ENCODE measurements at regions of chr5 and their contacts with region 1.

Region 1: DNA sequence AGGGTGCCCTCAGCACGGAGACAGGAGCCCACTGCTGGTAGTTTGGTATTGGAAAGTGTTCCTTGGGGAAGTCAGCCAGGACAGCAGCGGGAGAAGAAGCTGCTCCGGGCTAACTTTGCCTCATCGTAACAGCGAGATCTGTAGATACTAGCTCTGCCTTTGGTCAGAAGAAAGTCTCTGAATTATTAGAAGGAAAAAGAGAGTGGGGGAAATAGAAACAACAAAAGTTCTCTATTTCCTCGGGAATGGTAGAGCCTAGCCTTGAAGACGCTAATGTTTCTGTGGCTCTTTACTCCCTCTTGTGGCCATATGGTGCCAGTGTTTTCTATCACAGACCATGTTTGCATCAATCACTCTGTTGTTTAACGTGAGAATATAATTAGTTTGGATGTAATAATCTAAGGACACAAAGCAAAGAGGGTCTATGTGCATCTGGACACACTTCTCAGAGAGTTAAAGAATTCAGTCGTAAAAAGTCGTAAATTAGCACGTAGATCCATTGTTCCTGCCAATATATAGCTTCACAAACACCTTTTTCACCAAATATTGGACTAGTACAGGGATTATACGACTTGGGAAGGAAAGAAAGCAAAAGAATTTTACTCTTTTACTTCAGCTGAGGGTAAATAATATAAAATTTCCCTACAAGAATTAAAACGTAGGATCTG is 40.2 kb upstream of the HSD17B4 start:
- DNase-seq: peak; percentile 25
- H3K4me3 ChIP-seq: peak overlapping the region; percentile 71
- H3K27ac ChIP-seq: peak overlapping the region; percentile 74
- H3K4me1 ChIP-seq: peaks cover 9% of the 10 kb centered on the region
- H3K27me3 ChIP-seq: peaks cover 14% of the 10 kb centered on the region
- CTCF ChIP-seq: peak; percentile 96

Region 2: GRCh38 chr5:118987988-118988865 is 423.8 kb before region 1 on chr5 and contains the start of gene DTWD2:
- intact Hi-C with region 1: loop called (anchors 5 kb)
- DNase-seq: peak; percentile 94
- H3K4me3 ChIP-seq: peak within 1 kb of the TSS; percentile 86
- H3K27ac ChIP-seq: peak within 1 kb of the TSS; percentile 99
- H3K4me1 ChIP-seq: peaks cover 27% of the 10 kb centered on the region
- H3K27me3 ChIP-seq: no peaks in the 10 kb centered on the region
- CTCF ChIP-seq: peak; percentile 88
- total RNA-seq, gene DTWD2: 14.7 TPM

Region 3: DNA sequence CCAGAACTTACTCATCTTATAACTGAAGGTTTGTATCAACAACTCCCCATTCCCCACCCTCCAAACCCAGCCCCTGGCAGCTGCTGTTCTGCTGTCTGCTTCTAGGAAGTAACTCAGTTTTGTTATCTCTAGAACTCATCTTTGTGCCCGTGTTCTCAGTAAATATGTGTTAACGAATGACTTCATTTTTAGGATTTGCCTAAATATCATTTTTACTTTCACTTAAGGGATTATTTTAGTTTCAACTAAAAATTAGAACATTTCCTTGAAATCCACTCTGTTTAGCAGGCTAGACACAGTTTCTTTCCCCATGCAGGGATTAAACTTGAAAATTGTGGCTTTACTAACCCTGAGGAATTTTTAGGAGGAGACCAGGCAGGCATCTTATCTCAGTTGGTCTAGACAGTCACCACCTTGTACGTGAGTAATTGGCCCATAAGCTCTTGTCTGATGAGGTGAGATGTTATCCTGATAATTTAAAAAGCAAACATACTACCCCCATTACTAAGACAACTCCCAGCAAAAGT is 124.5 kb before region 1 on chr5:
- intact Hi-C with region 1: loop called (anchors 10 kb)
- DNase-seq: no peak
- H3K4me3 ChIP-seq: no peak overlapping the region
- H3K27ac ChIP-seq: no peak overlapping the region
- H3K4me1 ChIP-seq: peaks cover 58% of the 10 kb centered on the region
- H3K27me3 ChIP-seq: no peaks in the 10 kb centered on the region
- CTCF ChIP-seq: no peak

Region 4: DNA sequence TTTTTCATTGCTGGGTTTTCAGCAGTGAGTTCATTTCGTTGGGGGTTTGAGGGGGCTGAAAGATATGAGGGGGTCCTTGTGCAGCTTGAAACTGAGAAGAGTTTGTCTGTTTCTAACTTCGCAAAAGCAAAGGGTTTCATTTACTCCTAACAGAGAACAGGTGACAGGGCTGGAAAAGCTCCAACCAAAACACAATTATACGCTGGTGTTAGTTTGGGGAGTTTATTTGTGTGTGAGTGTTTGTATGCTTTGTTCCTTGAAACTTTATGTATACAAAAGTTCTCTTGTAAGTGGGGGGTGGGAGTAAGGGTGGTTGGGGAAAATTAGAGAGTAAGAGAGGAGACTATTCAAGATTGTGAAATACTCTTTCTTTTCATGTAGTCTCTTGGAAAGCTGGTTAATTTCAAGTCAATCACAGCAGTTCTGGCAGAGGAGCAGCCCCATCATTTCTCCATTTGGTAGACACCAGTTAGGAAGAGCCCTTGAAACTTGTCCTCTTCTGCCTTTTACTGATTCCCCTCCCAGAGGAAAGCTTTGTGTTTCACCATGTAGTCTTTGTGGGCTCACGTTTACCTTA is 55.4 kb before region 1 on chr5:
- intact Hi-C with region 1: no loop called
- DNase-seq: no peak
- H3K4me3 ChIP-seq: peak overlapping the region; percentile 74
- H3K27ac ChIP-seq: peak overlapping the region; percentile 68
- H3K4me1 ChIP-seq: peaks cover 59% of the 10 kb centered on the region
- H3K27me3 ChIP-seq: no peaks in the 10 kb centered on the region
- CTCF ChIP-seq: no peak

Region 5: DNA sequence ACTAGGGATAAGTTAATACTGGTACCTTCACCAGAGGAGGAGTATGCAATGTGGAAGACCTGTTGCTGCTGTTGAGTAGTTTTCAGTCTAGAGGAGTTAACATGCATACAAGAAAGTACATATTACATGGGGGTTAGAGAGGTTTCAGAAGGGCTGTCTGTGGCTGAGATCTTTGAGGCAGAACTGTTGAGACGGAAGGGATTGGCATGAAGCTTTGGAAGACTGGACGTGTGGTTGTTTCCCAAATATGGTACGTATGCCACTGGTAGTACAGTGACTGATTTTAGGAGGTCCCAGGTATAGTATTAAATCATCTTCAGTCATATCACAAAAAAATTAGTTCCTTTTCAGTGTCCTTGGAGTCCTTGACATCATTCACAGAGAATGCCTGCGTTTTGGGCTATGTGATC is 38.6 kb before region 1 on chr5:
- intact Hi-C with region 1: no loop called
- DNase-seq: no peak
- H3K4me3 ChIP-seq: no peak overlapping the region
- H3K27ac ChIP-seq: no peak overlapping the region
- H3K4me1 ChIP-seq: peaks cover 15% of the 10 kb centered on the region
- H3K27me3 ChIP-seq: no peaks in the 10 kb centered on the region
- CTCF ChIP-seq: no peak